ENCODE measurements at regions of chr7 and their contacts with region 1.

Region 1: GRCh38 chr7:1086588-1087464 is 1.1 kb upstream of the GPER1 start:
- DNase-seq: no peak
- ATAC-seq: peak; percentile 96
- H3K4me3 ChIP-seq: peak overlapping the region; percentile 43; the same call in 1 of the 2 replicates
- H3K27ac ChIP-seq: peak overlapping the region; percentile 76
- H3K4me1 ChIP-seq: peaks cover 12% of the 10 kb centered on the region
- H3K27me3 ChIP-seq: no peaks in the 10 kb centered on the region
- CTCF ChIP-seq: peak; percentile 73 to 81 (median 78)
- EP300 ChIP-seq: peak; percentile 64 to 72
- POLR2A ChIP-seq: peak; percentile 70
- RAD21 ChIP-seq: peak; percentile 57; the same call in 1 of the 2 replicates

Region 2: DNA sequence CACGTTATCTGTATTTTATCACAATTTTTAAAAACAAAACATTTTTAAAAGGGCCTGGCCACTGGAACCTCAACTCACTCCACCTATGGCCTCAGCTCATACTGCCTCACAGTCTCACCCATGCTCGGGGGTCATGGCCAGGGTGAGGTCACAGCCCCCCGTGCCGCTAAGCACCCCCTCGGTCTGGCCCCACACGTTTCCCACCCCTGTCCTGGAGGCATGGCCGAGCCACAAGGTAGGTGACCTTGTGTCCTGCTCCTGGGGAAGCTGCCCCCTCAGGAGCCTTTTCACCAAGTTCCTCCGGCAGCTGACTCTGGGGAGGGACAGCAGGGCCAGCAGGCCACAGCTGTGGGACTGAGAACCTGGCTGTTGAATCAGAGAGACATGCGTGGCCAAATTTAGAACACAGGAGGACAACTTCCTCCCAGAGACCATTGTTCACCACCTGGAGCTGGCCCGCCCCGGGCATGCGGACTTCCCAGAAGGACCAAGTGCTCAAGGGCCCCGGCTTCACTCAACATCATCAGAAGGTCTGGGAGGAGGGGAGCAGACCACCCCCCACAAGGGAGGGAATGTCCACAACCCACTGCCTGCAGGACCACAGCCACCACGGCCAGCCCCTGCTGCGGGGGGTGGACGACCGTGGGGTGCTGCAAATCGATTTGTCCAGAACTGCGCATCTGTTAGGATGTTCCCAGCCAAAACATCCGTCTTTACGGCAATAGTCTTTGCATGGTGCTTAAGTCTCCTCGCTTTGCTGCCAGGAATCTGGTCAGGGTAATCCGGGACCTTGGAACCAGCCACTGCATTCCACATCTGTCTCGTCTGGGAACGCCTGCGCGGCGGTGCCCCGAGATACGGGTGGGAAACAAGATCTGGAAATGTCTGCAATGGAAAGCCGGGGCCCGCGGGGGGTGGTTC is 518.5 kb before region 1 on chr7:
- CTCF ChIA-PET with region 1: no interaction called
- POLR2A ChIA-PET with region 1: no interaction called
- RAD21 ChIA-PET with region 1: no interaction called
- SMC1A ChIA-PET with region 1: no interaction called
- in situ Hi-C with region 1: no loop called
- intact Hi-C with region 1: no loop called
- DNase-seq: no peak
- ATAC-seq: no peak
- H3K4me3 ChIP-seq: no peak overlapping the region
- H3K27ac ChIP-seq: no peak overlapping the region
- H3K4me1 ChIP-seq: no peaks in the 10 kb centered on the region
- H3K27me3 ChIP-seq: no peaks in the 10 kb centered on the region
- CTCF ChIP-seq: no peak
- EP300 ChIP-seq: no peak
- POLR2A ChIP-seq: no peak
- RAD21 ChIP-seq: no peak

Region 3: GRCh38 chr7:1059200-1060091 is 27.4 kb before region 1 on chr7:
- CTCF ChIA-PET with region 1: interaction called, 32 read pairs
- POLR2A ChIA-PET with region 1: interaction called, 11 read pairs
- RAD21 ChIA-PET with region 1: interaction called, 3 read pairs
- SMC1A ChIA-PET with region 1: interaction called, 19 read pairs
- in situ Hi-C with region 1: no loop called
- intact Hi-C with region 1: no loop called
- DNase-seq: peak; percentile 33
- ATAC-seq: peak; percentile 69
- H3K4me3 ChIP-seq: no peak overlapping the region
- H3K27ac ChIP-seq: no peak overlapping the region
- H3K4me1 ChIP-seq: peaks cover 33% of the 10 kb centered on the region
- H3K27me3 ChIP-seq: no peaks in the 10 kb centered on the region
- CTCF ChIP-seq: no peak
- EP300 ChIP-seq: no peak
- POLR2A ChIP-seq: no peak
- RAD21 ChIP-seq: no peak

Region 4: GRCh38 chr7:1137510-1138167 is 50.8 kb after region 1 on chr7:
- CTCF ChIA-PET with region 1: interaction called, 31 read pairs
- POLR2A ChIA-PET with region 1: interaction called, 16 read pairs
- RAD21 ChIA-PET with region 1: interaction called, 22 read pairs
- SMC1A ChIA-PET with region 1: interaction called, 15 read pairs
- in situ Hi-C with region 1: no loop called
- intact Hi-C with region 1: loop called (anchors 5 kb)
- DNase-seq: no peak
- ATAC-seq: peak; percentile 85
- H3K4me3 ChIP-seq: peak overlapping the region; percentile 83
- H3K27ac ChIP-seq: peak overlapping the region; percentile 46
- H3K4me1 ChIP-seq: no peaks in the 10 kb centered on the region; the same call in 1 of the 2 replicates
- H3K27me3 ChIP-seq: no peaks in the 10 kb centered on the region
- CTCF ChIP-seq: no peak
- EP300 ChIP-seq: no peak; a peak in 1 of 4 replicates
- POLR2A ChIP-seq: no peak
- RAD21 ChIP-seq: no peak

Region 5: GRCh38 chr7:1169409-1170368 is 82.9 kb after region 1 on chr7:
- CTCF ChIA-PET with region 1: interaction called, 60 read pairs
- POLR2A ChIA-PET with region 1: interaction called, 3 read pairs
- RAD21 ChIA-PET with region 1: interaction called, 8 read pairs
- SMC1A ChIA-PET with region 1: interaction called, 9 read pairs
- in situ Hi-C with region 1: no loop called
- intact Hi-C with region 1: no loop called
- DNase-seq: peak; percentile 56
- ATAC-seq: peak; percentile 100
- H3K4me3 ChIP-seq: peak overlapping the region; percentile 47
- H3K27ac ChIP-seq: peak overlapping the region; percentile 82
- H3K4me1 ChIP-seq: peaks cover 9% of the 10 kb centered on the region
- H3K27me3 ChIP-seq: no peaks in the 10 kb centered on the region
- CTCF ChIP-seq: peak; percentile 90 to 98 (median 97)
- EP300 ChIP-seq: no peak
- POLR2A ChIP-seq: peak; percentile 74; the same call in 1 of the 2 replicates
- RAD21 ChIP-seq: peak; percentile 63

Region 6: DNA sequence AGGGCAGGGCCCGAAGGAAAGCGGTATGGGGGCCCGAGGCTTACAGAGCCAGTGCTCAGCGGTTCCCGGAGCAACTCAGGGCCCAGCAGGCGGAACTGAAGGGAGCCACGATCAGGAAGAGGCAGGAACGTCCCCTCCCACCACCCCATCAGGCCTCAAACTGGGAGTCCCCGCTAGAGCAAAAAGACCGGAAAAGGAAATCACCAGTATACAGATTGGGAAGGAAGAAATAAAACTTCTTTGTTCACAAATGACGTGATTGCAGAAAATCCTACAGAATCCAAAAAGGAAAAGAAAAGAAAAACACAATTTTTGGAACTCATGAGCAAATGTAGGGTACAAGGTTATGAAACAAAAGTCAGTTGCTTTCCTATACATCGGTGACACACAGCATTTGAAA is 94.8 kb after region 1 on chr7:
- CTCF ChIA-PET with region 1: interaction called, 60 read pairs
- POLR2A ChIA-PET with region 1: interaction called, 8 read pairs
- RAD21 ChIA-PET with region 1: interaction called, 20 read pairs
- SMC1A ChIA-PET with region 1: interaction called, 11 read pairs
- in situ Hi-C with region 1: no loop called
- intact Hi-C with region 1: loop called (anchors 1 kb)
- DNase-seq: no peak
- ATAC-seq: no peak
- H3K4me3 ChIP-seq: no peak overlapping the region
- H3K27ac ChIP-seq: no peak overlapping the region
- H3K4me1 ChIP-seq: no peaks in the 10 kb centered on the region
- H3K27me3 ChIP-seq: peaks cover 0 to 2% of the 10 kb centered on the region in 2 experiments; a peak in 1 of 4 replicates
- CTCF ChIP-seq: no peak
- EP300 ChIP-seq: no peak
- POLR2A ChIP-seq: no peak
- RAD21 ChIP-seq: no peak

Region 7: DNA sequence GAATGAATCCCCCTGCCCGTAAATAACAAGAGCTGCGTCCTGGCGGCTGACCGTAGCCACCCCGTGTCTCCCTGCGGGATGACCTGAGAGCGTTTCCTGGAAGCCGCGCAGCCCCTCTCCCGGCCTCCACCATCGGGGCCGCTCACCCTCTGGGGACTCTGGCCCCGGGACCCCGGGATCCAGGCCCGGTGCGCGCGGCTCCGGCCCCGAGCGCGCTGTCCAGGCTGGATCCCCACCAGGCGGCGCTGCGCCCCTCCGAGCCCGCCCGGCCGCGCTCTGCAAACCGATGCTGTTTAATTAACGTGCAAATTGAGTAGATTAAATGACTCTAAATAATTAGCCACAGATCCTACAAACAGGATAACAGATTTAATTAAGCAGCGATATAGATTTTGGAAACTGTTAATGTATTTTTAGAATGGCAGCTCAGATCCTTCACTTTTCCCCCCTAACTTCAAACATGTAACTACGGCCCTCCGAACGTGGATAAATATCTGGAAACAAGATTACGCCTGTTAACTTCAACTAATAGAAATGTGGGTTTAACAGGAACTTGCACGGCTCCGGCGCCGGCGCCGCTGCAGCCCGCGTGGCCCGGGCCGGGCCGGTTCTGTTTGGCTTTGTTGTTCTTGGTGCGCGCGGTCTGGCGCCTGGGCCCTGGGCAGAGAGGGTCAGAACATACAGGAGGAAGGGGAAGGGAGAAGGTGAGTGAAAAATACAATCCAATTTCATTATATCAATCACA is 138.8 kb after region 1 on chr7:
- CTCF ChIA-PET with region 1: no interaction called
- POLR2A ChIA-PET with region 1: no interaction called
- RAD21 ChIA-PET with region 1: no interaction called
- SMC1A ChIA-PET with region 1: no interaction called
- in situ Hi-C with region 1: no loop called
- intact Hi-C with region 1: no loop called
- DNase-seq: no peak
- ATAC-seq: peak; percentile 61; the same call in 2 of the 3 replicates
- H3K4me3 ChIP-seq: no peak overlapping the region
- H3K27ac ChIP-seq: no peak overlapping the region
- H3K4me1 ChIP-seq: no peaks in the 10 kb centered on the region
- H3K27me3 ChIP-seq: no peaks in the 10 kb centered on the region; a peak in 3 of 4 replicates
- CTCF ChIP-seq: peak; percentile 56 to 60 (median 59)
- EP300 ChIP-seq: no peak
- POLR2A ChIP-seq: no peak
- RAD21 ChIP-seq: peak; percentile 60

Measured in GM12878 (cell line).